ENCODE measurements at regions of chr3 and their contacts with region 1.

Region 1: GRCh38 chr3:188947401-188948280 is 224.1 kb upstream of the TPRG1 start:
- DNase-seq: peak; percentile 99
- H3K4me3 Mint-ChIP-seq: peak overlapping the region; percentile 71
- H3K27ac Mint-ChIP-seq: peak overlapping the region; percentile 96
- H3K4me1 Mint-ChIP-seq: peaks cover 58% of the 10 kb centered on the region
- H3K27me3 Mint-ChIP-seq: no peaks in the 10 kb centered on the region
- CTCF ChIP-seq: peak; percentile 46

Region 2: GRCh38 chr3:188627652-188628051 is 320.0 kb before region 1 on chr3:
- CTCF ChIA-PET with region 1: no interaction called
- POLR2A ChIA-PET with region 1: interaction called, 5 read pairs
- intact Hi-C with region 1: loop called (anchors 1 kb)
- DNase-seq: peak; percentile 41
- H3K4me3 Mint-ChIP-seq: no peak overlapping the region
- H3K27ac Mint-ChIP-seq: peak overlapping the region; percentile 85
- H3K4me1 Mint-ChIP-seq: peaks cover 37% of the 10 kb centered on the region
- H3K27me3 Mint-ChIP-seq: no peaks in the 10 kb centered on the region
- CTCF ChIP-seq: no peak

Region 3: GRCh38 chr3:188819939-188820338 is 127.7 kb before region 1 on chr3:
- CTCF ChIA-PET with region 1: interaction called, 3 read pairs
- POLR2A ChIA-PET with region 1: interaction called, 20 read pairs
- intact Hi-C with region 1: no loop called
- DNase-seq: peak; percentile 47
- H3K4me3 Mint-ChIP-seq: no peak overlapping the region
- H3K27ac Mint-ChIP-seq: peak overlapping the region; percentile 85
- H3K4me1 Mint-ChIP-seq: peaks cover 35% of the 10 kb centered on the region
- H3K27me3 Mint-ChIP-seq: no peaks in the 10 kb centered on the region
- CTCF ChIP-seq: no peak

Region 4: GRCh38 chr3:188842639-188843038 is 105.0 kb before region 1 on chr3:
- CTCF ChIA-PET with region 1: interaction called, 3 read pairs
- POLR2A ChIA-PET with region 1: interaction called, 11 read pairs
- intact Hi-C with region 1: no loop called
- DNase-seq: peak; percentile 30
- H3K4me3 Mint-ChIP-seq: no peak overlapping the region
- H3K27ac Mint-ChIP-seq: peak overlapping the region; percentile 51
- H3K4me1 Mint-ChIP-seq: peaks cover 18% of the 10 kb centered on the region
- H3K27me3 Mint-ChIP-seq: no peaks in the 10 kb centered on the region
- CTCF ChIP-seq: no peak

Region 5: DNA sequence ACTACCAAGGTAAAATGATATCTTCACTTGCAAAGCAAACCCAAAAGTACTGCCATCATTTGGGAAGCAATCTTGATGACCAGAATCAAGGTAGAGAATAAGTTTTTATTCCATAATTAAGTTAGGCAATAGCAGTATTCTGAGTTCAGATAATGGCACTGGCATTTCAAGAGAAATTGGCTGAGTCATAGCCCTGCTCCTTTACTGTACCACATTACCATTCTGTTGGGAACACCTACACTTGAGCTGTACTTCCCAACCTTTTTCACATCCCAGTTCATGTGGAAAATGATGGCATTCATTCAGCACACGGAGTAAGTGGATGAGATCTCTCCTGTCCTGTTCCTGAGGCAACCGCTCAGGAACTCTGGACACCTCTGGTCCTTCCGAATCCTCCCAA is 87.5 kb before region 1 on chr3:
- CTCF ChIA-PET with region 1: interaction called, 3 read pairs
- POLR2A ChIA-PET with region 1: interaction called, 37 read pairs
- intact Hi-C with region 1: no loop called
- DNase-seq: peak; percentile 42
- H3K4me3 Mint-ChIP-seq: no peak overlapping the region
- H3K27ac Mint-ChIP-seq: peak overlapping the region; percentile 46
- H3K4me1 Mint-ChIP-seq: peaks cover 25% of the 10 kb centered on the region
- H3K27me3 Mint-ChIP-seq: no peaks in the 10 kb centered on the region
- CTCF ChIP-seq: no peak

Measured in MCF 10A (cell line).